ENCODE measurements at regions of chr4 and their contacts with region 1.

Region 1: GRCh38 chr4:177250056-177250696 is 59.5 kb upstream of the NEIL3 start:
- DNase-seq: peak; percentile 49 to 68 (median 62)
- H3K4me3 ChIP-seq: no peak overlapping the region
- H3K4me3 Mint-ChIP-seq: peak overlapping the region in 3 of 8 donors; percentile 7 to 77 (median 48)
- H3K27ac ChIP-seq: no peak overlapping the region
- H3K27ac Mint-ChIP-seq: no peak overlapping the region
- H3K4me1 ChIP-seq: peaks cover 10% of the 10 kb centered on the region
- H3K4me1 Mint-ChIP-seq: peaks cover 9 to 13% (median 11%) of the 10 kb centered on the region in 4 donors
- H3K27me3 ChIP-seq: no peaks in the 10 kb centered on the region
- H3K27me3 Mint-ChIP-seq: peaks cover 4 to 7% of the 10 kb centered on the region in 2 donors

Region 2: DNA sequence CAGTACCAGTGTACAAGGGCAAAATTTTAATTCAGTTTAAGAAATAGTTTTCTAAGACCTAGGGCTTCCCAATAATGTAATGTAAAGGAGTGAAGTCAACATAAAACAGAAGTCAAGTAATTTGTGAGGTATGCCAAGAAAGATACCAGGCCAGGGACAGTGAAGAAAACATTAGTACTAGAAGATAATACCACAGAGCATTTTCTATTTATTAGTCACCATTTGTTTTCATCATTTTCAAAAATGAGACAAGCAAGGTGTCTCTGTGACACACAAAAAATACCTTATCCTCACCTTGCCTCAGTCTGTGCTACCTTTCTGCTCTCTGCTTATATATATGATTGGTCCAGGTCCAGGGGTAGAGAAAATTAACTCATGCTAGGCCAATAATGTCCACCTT is 504.3 kb before region 1 on chr4:
- CTCF ChIA-PET with region 1: no interaction called
- POLR2A ChIA-PET with region 1: no interaction called
- intact Hi-C with region 1: no loop called
- DNase-seq: no peak
- H3K4me3 ChIP-seq: no peak overlapping the region
- H3K4me3 Mint-ChIP-seq: no peak overlapping the region
- H3K27ac ChIP-seq: no peak overlapping the region
- H3K27ac Mint-ChIP-seq: no peak overlapping the region
- H3K4me1 ChIP-seq: no peaks in the 10 kb centered on the region
- H3K4me1 Mint-ChIP-seq: no peaks in the 10 kb centered on the region
- H3K27me3 ChIP-seq: no peaks in the 10 kb centered on the region
- H3K27me3 Mint-ChIP-seq: no peaks in the 10 kb centered on the region

Region 3: GRCh38 chr4:177236886-177237285 is 13.3 kb before region 1 on chr4:
- CTCF ChIA-PET with region 1: interaction called, 10 read pairs
- POLR2A ChIA-PET with region 1: no interaction called
- intact Hi-C with region 1: no loop called
- DNase-seq: no peak
- H3K4me3 ChIP-seq: no peak overlapping the region
- H3K4me3 Mint-ChIP-seq: no peak overlapping the region
- H3K27ac ChIP-seq: no peak overlapping the region
- H3K27ac Mint-ChIP-seq: no peak overlapping the region
- H3K4me1 ChIP-seq: no peaks in the 10 kb centered on the region
- H3K4me1 Mint-ChIP-seq: peaks cover 0 to under 1% (median 0%) of the 10 kb centered on the region in 4 donors
- H3K27me3 ChIP-seq: no peaks in the 10 kb centered on the region
- H3K27me3 Mint-ChIP-seq: peaks cover under 1% of the 10 kb centered on the region in 2 donors

Region 4: DNA sequence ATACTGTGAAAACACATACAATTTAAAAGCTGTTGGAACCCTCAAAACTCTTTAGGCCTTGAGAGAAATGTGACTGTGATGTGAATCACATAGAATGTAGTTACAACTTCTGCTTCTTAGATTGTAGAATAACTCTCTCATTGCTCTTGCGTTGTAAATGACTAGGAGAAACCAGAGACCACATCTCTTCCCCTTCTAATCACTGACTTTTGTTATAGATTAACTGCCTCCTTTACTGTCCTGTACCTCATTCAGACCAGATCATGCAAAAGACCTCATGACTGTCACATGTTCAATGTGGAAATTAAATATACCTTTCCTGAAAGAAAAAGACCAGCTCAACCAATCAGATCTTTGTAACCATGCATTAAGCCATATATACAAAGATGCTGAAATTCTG is 16.3 kb after region 1 on chr4:
- CTCF ChIA-PET with region 1: interaction called, 10 read pairs
- POLR2A ChIA-PET with region 1: no interaction called
- intact Hi-C with region 1: no loop called
- DNase-seq: no peak
- H3K4me3 ChIP-seq: no peak overlapping the region
- H3K4me3 Mint-ChIP-seq: no peak overlapping the region
- H3K27ac ChIP-seq: no peak overlapping the region
- H3K27ac Mint-ChIP-seq: no peak overlapping the region
- H3K4me1 ChIP-seq: no peaks in the 10 kb centered on the region
- H3K4me1 Mint-ChIP-seq: no peaks in the 10 kb centered on the region
- H3K27me3 ChIP-seq: no peaks in the 10 kb centered on the region
- H3K27me3 Mint-ChIP-seq: peaks cover 4 to 5% of the 10 kb centered on the region in 2 donors

Region 5: DNA sequence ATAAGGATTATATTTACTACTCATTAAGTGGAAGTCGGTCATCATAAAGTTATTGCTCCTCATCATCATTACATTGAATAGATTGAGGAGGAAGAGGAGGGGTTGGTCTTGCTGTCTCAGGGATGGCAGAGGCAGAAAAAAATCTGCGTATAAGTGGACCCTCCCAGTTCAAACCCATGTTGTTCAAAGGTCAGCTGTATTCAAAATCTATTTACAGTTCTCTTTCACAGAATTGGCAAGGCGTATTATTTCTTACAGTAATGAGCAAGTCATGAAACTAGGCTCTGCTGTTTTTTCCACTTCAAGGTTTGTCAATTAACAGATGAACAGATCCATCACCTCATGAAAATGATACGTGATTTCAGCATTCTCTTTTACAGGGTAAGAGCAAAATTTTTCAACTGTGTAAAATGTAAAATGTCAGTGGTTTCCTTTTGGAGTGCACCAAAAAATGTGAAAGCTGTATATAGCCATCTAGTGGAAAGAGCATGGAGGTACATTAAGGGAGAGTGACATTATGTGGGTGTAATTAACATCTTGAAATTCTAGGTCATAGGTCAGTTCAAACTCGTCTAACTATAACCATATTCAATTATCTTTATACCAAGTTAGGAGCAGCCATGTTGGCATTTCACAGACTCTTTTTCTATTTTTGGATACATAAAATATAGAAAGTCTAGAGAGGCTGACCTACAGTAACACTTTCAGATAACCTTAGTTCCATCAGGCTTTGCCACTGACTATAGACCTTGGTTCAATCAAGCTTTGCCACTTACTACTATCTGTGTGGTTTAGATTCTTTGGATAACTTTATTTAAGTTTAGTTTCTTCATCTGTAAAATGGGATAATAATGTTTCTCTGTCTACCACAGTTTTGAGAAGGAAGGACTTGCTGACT is 89.5 kb after region 1 on chr4:
- CTCF ChIA-PET with region 1: interaction called, 108 read pairs
- POLR2A ChIA-PET with region 1: interaction called, 9 read pairs
- intact Hi-C with region 1: loop called (anchors 1 kb)
- DNase-seq: peak in 4 of 5 donors; percentile 38 to 57 (median 50)
- H3K4me3 ChIP-seq: no peak overlapping the region
- H3K4me3 Mint-ChIP-seq: peak overlapping the region in 3 of 8 donors; percentile 53 to 66 (median 53)
- H3K27ac ChIP-seq: no peak overlapping the region
- H3K27ac Mint-ChIP-seq: peak overlapping the region in 3 of 7 donors; percentile 3 to 67 (median 48)
- H3K4me1 ChIP-seq: peaks cover 9% of the 10 kb centered on the region
- H3K4me1 Mint-ChIP-seq: peaks cover 7 to 15% (median 10%) of the 10 kb centered on the region in 4 donors
- H3K27me3 ChIP-seq: no peaks in the 10 kb centered on the region
- H3K27me3 Mint-ChIP-seq: no peaks in the 10 kb centered on the region

Region 6: DNA sequence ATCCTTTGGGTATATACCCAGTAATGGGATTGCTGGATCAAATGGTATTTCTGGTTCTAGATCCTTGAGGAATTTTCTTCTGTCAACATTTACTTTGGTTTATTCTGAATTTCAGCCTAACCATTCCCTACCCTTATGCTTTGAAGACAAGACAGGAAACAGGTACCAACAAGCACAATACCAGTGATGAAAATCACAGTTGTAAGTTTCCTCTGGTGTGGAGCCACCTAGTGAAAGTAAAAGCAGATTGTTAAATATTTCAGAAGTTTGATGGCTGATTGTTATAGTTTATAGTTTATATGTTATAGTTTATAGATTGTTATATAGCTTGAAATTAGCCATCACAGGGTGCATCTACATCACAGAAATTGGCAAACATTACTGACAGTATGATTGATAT is 296.6 kb after region 1 on chr4:
- CTCF ChIA-PET with region 1: no interaction called
- POLR2A ChIA-PET with region 1: no interaction called
- intact Hi-C with region 1: loop called (anchors 5 kb)
- DNase-seq: no peak
- H3K4me3 ChIP-seq: no peak overlapping the region
- H3K4me3 Mint-ChIP-seq: no peak overlapping the region
- H3K27ac ChIP-seq: no peak overlapping the region
- H3K27ac Mint-ChIP-seq: no peak overlapping the region
- H3K4me1 ChIP-seq: no peaks in the 10 kb centered on the region
- H3K4me1 Mint-ChIP-seq: no peaks in the 10 kb centered on the region
- H3K27me3 ChIP-seq: no peaks in the 10 kb centered on the region
- H3K27me3 Mint-ChIP-seq: no peaks in the 10 kb centered on the region